Endothelial cell of umbilical vein (primary cell): ENCODE measurements at regions of chr2 and their contacts with region 1.

Region 1: DNA sequence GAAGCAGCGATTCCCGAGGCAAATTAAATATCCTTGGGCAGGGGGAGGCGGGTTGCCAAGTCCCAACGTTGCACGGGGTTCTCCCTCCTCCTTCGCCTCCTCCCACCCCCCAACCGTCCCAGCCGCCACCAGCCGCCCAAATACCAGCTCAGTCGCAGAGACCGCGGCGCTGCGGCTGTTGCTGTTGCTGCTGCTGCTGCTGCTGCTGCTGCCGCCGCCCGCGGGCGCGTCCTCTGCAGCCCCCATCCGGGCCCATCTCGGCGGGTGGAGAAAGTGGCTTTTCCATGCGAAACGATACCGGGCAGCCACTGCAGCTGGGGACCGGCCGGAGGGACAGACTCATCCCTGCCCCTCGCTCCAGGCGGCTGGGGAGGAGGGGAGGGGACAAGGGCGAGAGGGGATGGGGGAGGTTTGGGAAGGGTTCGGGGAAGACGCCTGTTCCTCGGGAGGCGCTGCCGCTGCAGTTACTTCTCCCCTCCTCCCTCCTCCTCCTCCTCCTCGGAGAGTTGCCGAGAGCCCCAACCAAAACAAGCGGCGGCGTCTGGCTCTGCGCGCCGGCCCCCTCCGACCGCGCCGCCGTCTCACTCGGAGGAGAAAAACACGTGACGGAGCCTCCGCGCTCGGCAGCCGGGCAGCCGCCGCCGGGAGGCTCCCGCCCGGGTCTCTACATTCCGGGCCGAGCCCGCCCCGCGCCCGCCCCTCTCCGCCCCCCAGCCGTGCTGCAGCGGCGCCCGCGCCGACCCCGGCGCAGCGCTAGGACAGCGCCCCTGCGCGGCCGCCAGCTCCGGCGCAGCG is at the start of gene IRS1:
- DNase-seq: peak; percentile 12
- H3K4me3 ChIP-seq: peak within 1 kb of the TSS; percentile 35 to 46 (median 43)
- H3K27ac ChIP-seq: no peak within 1 kb of the TSS
- H3K4me1 ChIP-seq: peaks cover 15% of the 10 kb centered on the region
- H3K27me3 ChIP-seq: peaks cover 19 to 30% of the 10 kb centered on the region in 2 experiments
- CTCF ChIP-seq: peak in 1 of 2 donors; percentile 11
- POLR2A ChIP-seq: no peak
- total RNA-seq, gene IRS1: 0.05 and 0.11 TPM in 2 replicates

Region 2: GRCh38 chr2:225668606-225669266 is 1130.6 kb before region 1 on chr2:
- CTCF ChIA-PET with region 1: interaction called, 103 read pairs
- POLR2A ChIA-PET with region 1: no interaction called
- dilution Hi-C with region 1: no loop called
- intact Hi-C with region 1: loop called (anchors 1 kb)
- DNase-seq: peak; percentile 54
- H3K4me3 ChIP-seq: no peak overlapping the region
- H3K27ac ChIP-seq: no peak overlapping the region
- H3K4me1 ChIP-seq: no peaks in the 10 kb centered on the region
- H3K27me3 ChIP-seq: no peaks in the 10 kb centered on the region
- CTCF ChIP-seq: peak; percentile 45 to 67
- POLR2A ChIP-seq: no peak

Region 3: GRCh38 chr2:225889446-225889850 is 909.9 kb before region 1 on chr2:
- CTCF ChIA-PET with region 1: interaction called, 65 read pairs
- POLR2A ChIA-PET with region 1: no interaction called
- dilution Hi-C with region 1: no loop called
- intact Hi-C with region 1: loop called (anchors 1 kb)
- DNase-seq: peak; percentile 25
- H3K4me3 ChIP-seq: no peak overlapping the region
- H3K27ac ChIP-seq: no peak overlapping the region
- H3K4me1 ChIP-seq: no peaks in the 10 kb centered on the region
- H3K27me3 ChIP-seq: no peaks in the 10 kb centered on the region
- CTCF ChIP-seq: peak; percentile 21 to 40
- POLR2A ChIP-seq: no peak

Region 4: DNA sequence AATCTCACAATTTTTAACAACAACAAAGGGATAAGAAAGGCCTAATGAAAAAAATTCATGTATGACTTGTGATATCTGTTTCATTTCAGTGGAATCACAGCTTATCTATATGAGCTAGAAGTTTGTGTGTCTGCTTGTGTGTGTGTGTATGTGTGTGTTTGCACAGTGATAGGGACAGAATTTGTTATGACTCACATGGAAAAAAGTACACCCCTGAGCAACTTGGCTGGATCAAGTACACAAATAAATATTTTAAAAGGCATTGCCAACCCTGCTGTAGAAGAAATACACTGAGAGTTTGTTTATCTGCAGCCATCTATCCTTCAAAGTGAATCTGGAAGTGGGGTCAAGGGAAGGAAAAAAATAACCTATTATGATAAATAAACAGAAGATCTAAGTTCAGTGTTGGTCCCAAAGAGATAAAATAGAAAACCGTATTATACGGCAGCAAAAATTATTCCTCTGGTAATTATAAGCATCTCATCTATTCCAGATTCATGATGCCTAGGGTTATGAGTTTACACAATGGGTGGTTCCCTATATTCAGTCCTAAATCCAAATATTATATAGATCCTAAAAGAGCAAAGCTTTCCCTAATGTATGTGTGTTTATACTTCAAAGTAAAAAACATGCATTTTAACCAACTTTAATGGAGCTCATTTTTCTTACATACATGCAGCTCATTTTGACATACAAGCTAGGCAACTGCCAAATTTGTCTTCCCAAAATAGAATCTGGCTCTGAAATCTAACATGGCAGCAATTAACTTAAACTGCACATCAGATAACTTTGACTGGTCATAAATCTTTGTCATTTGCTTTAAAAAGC is 420.4 kb before region 1 on chr2:
- CTCF ChIA-PET with region 1: interaction called, 3 read pairs
- POLR2A ChIA-PET with region 1: no interaction called
- dilution Hi-C with region 1: no loop called
- intact Hi-C with region 1: loop called (anchors 5 kb)
- DNase-seq: no peak
- H3K4me3 ChIP-seq: no peak overlapping the region
- H3K27ac ChIP-seq: no peak overlapping the region
- H3K4me1 ChIP-seq: peaks cover 8% of the 10 kb centered on the region
- H3K27me3 ChIP-seq: no peaks in the 10 kb centered on the region
- CTCF ChIP-seq: no peak
- POLR2A ChIP-seq: no peak

Region 5: GRCh38 chr2:226813148-226813701 is 13.8 kb after region 1 on chr2:
- CTCF ChIA-PET with region 1: interaction called, 17 read pairs
- POLR2A ChIA-PET with region 1: no interaction called
- dilution Hi-C with region 1: no loop called
- intact Hi-C with region 1: no loop called
- DNase-seq: no peak
- H3K4me3 ChIP-seq: no peak overlapping the region
- H3K27ac ChIP-seq: no peak overlapping the region
- H3K4me1 ChIP-seq: no peaks in the 10 kb centered on the region
- H3K27me3 ChIP-seq: no peaks in the 10 kb centered on the region
- CTCF ChIP-seq: no peak
- POLR2A ChIP-seq: no peak

Region 6: DNA sequence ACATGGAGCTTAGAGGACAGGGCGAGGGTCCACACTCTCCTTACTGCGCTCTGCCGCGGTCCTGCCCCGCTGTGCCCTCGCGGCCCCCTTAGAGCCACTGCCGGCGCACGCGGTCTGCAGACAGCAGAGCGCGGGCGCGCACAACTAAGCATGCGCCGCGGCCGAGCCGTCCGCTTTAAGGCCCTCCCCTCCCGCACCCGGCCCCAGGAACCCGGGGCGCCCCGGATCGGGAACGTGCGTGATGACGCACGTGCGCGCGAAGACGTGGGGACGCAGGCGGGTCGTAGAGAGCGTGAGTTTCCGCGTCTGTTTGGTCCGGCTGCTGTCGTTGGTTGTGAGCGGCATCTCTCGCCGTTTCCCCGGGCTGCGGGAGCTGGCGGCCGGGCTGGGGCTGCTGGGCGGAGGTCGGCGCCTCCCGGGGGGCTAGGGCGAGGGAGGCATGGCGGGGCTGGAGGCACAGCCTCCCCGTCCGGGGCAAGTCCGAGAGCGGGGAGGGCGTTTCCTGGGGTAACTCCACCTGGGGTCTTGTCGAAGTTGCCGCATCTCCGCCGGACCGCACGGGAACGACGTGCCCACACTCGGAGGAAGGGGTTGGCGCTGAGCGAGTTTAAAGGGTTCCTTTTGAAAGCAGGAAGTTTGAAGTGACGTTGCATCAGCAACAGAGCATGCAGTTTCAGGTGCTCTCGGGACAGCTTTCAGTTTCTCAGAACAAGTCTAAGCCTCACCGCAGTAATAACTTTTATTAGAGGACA is 36.6 kb after region 1 on chr2 and contains the start of gene RHBDD1:
- CTCF ChIA-PET with region 1: interaction called, 12 read pairs
- POLR2A ChIA-PET with region 1: no interaction called
- dilution Hi-C with region 1: no loop called
- intact Hi-C with region 1: no loop called
- DNase-seq: peak; percentile 93
- H3K4me3 ChIP-seq: peak within 1 kb of the TSS; percentile 74 to 84 (median 82)
- H3K27ac ChIP-seq: peak within 1 kb of the TSS; percentile 84
- H3K4me1 ChIP-seq: peaks cover 16% of the 10 kb centered on the region
- H3K27me3 ChIP-seq: no peaks in the 10 kb centered on the region
- CTCF ChIP-seq: no peak
- POLR2A ChIP-seq: peak; percentile 67
- total RNA-seq, gene RHBDD1: 16.1 and 19.4 TPM in 2 replicates

Region 7: DNA sequence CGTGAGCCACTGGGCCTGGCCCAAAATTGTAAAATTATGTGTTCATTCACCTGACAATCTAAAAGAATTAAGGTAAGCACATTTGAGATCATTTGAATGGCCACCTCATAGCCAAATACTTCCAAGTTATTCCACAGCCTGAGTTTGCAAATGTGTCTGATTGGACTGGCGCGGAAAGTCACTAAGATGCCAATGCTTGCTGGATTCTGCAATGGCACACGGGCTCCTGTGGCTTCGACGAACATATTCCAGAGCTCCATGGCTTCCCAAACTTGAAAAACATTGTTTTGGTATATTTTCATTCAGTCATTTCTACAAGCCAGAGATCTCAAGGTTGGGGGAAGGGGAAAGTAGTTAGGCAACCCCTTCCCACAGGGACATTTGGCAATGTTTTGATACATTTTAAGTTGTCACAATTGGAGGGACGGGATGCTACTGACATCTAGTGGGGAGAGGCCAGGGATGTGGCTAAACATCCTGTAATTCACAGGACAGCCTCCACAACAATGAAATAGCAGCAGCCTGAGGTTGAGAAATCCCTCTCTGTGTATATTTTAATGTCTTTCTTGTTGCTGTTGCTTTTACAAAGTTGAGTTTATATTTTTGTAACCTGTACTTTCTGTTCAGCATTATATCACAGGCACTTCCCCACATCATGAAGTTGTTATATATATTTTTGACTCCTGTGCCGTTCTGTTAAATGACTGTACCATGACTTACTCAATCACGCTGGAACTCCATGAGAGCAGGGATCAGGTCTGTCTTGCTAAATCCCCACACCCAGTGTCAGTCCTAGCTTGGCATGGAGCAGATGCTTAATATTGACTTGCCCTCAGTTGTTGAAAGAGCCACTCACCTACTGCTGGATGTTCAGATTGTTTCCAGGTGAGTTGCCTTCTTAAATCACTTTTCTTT is 307.7 kb after region 1 on chr2:
- CTCF ChIA-PET with region 1: no interaction called
- POLR2A ChIA-PET with region 1: no interaction called
- dilution Hi-C with region 1: no loop called
- intact Hi-C with region 1: loop called (anchors 5 kb)
- DNase-seq: peak; percentile 32
- H3K4me3 ChIP-seq: no peak overlapping the region
- H3K27ac ChIP-seq: no peak overlapping the region
- H3K4me1 ChIP-seq: no peaks in the 10 kb centered on the region
- H3K27me3 ChIP-seq: no peaks in the 10 kb centered on the region
- CTCF ChIP-seq: peak; percentile 26 to 34
- POLR2A ChIP-seq: no peak